Caco-2 (cell line): ENCODE measurements at regions of chr22 and their contacts with region 1.

Region 1: DNA sequence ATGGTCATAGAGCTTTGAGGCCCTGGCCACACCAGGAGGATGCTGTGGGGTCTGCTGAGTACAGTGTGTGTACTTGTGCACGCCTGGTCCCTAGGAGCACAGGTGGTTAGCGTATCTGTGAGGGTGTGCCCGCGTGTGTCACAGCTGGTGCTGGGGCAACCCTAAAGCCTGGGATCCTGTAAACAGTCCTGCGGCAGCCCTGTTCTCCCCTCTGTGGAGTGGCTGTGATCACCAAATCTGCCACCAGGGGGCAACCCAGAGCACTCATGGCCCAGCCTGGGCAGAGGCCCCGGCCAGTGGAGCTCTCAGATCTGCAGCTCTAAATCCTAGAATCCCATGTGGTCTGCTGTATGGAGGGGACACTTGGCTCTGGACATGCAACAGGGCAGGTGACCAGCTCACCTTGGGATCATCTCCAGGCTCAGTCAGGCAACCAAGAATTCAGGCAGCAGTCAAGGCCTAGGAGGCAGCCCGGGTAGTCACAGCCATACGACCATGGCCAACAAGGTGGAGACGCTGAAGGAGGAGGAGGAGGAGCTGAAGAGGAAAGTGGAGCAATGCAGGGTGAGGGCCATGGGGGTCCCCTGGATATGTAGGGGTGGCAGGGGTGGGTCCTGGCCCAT is 3.9 kb downstream of the SH3BP1 start:
- DNase-seq: peak; percentile 69 to 90
- H3K4me3 ChIP-seq: no peak overlapping the region
- H3K4me3 Mint-ChIP-seq: no peak overlapping the region
- H3K27ac Mint-ChIP-seq: no peak overlapping the region
- H3K4me1 ChIP-seq: peaks cover 21% of the 10 kb centered on the region
- H3K4me1 Mint-ChIP-seq: peaks cover 13% of the 10 kb centered on the region
- H3K27me3 ChIP-seq: no peaks in the 10 kb centered on the region
- H3K27me3 Mint-ChIP-seq: no peaks in the 10 kb centered on the region
- CTCF ChIP-seq: peak; percentile 83 to 85

Region 2: GRCh38 chr22:37658133-37659065 is 15.1 kb after region 1 on chr22 and contains the start of gene PDXP:
- CTCF ChIA-PET with region 1: interaction called, 66 read pairs
- POLR2A ChIA-PET with region 1: interaction called, 7 read pairs
- intact Hi-C with region 1: loop called (anchors 1 kb)
- DNase-seq: peak; percentile 98 to 99
- H3K4me3 ChIP-seq: peak within 1 kb of the TSS; percentile 98
- H3K4me3 Mint-ChIP-seq: peak within 1 kb of the TSS; percentile 89
- H3K27ac Mint-ChIP-seq: peak within 1 kb of the TSS; percentile 84
- H3K4me1 ChIP-seq: peaks cover 18% of the 10 kb centered on the region
- H3K4me1 Mint-ChIP-seq: peaks cover 19% of the 10 kb centered on the region
- H3K27me3 ChIP-seq: no peaks in the 10 kb centered on the region
- H3K27me3 Mint-ChIP-seq: no peaks in the 10 kb centered on the region
- CTCF ChIP-seq: no peak
- total RNA-seq, gene PDXP: 24.1 and 24.5 TPM in 2 replicates

Region 3: GRCh38 chr22:37676736-37677492 is 33.6 kb after region 1 on chr22:
- CTCF ChIA-PET with region 1: interaction called, 43 read pairs
- POLR2A ChIA-PET with region 1: interaction called, 3 read pairs
- intact Hi-C with region 1: loop called (anchors 1 kb)
- DNase-seq: peak; percentile 84 to 88
- H3K4me3 ChIP-seq: peak overlapping the region; percentile 53
- H3K4me3 Mint-ChIP-seq: peak overlapping the region; percentile 79
- H3K27ac Mint-ChIP-seq: peak overlapping the region; percentile 65
- H3K4me1 ChIP-seq: peaks cover 9% of the 10 kb centered on the region; the same call in 1 of the 2 replicates
- H3K4me1 Mint-ChIP-seq: peaks cover 7% of the 10 kb centered on the region
- H3K27me3 ChIP-seq: no peaks in the 10 kb centered on the region
- H3K27me3 Mint-ChIP-seq: no peaks in the 10 kb centered on the region
- CTCF ChIP-seq: no peak

Region 4: GRCh38 chr22:37734964-37735451 is 91.7 kb after region 1 on chr22:
- CTCF ChIA-PET with region 1: interaction called, 8 read pairs
- POLR2A ChIA-PET with region 1: no interaction called
- intact Hi-C with region 1: loop called (anchors 5 kb)
- DNase-seq: peak; percentile 75 to 77
- H3K4me3 ChIP-seq: no peak overlapping the region
- H3K4me3 Mint-ChIP-seq: no peak overlapping the region
- H3K27ac Mint-ChIP-seq: no peak overlapping the region
- H3K4me1 ChIP-seq: peaks cover 35% of the 10 kb centered on the region
- H3K4me1 Mint-ChIP-seq: peaks cover 13% of the 10 kb centered on the region
- H3K27me3 ChIP-seq: no peaks in the 10 kb centered on the region
- H3K27me3 Mint-ChIP-seq: no peaks in the 10 kb centered on the region
- CTCF ChIP-seq: peak; percentile 44 to 71